Panc1 (cell line): ENCODE measurements at regions of chr17 and their contacts with region 1.

Region 1: DNA sequence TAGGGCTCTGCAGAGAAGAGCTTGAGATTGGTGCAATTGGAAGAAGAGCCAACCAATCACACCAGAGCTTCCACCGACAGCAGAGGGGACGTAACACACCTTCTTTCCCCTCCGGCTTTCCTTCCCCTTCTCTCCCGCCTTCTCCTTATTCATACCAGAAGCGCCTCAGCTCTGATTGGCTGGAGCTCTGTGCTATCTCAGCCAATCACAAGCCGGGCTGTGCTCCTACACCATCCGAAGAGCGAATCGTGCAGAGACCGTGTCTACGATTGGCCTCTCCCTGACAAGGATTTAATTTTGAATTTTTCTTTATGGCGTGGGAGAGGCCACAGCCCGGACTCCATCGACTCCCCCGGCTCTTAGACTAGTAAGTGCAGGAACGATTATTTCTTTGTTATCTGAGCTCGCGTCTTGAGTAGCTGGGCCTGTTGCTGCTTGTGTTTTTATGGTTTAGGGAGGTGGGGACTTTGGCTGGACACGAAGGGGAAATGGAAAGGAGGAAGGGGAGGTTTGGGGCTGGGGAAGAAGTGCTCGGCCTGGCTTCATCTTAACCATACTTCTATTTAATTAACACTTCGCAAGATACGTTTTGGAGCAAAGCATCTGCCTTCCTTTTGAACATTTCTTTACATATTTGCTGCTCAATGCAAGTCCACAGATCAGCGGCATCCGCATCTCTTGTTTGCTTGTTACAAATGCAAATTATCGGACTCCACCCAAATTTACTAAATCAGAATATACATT is at the start of gene PRR11:
- DNase-seq: no peak
- ATAC-seq: peak; percentile 89
- H3K4me3 ChIP-seq: peak within 1 kb of the TSS; percentile 80 to 86
- H3K27ac ChIP-seq: peak within 1 kb of the TSS; percentile 95
- H3K4me1 ChIP-seq: peaks cover 30% of the 10 kb centered on the region
- H3K27me3 ChIP-seq: no peaks in the 10 kb centered on the region
- CTCF ChIP-seq: no peak
- total RNA-seq, gene PRR11: 39.8 TPM

Region 2: GRCh38 chr17:58344047-58344790 is 811.4 kb before region 1 on chr17:
- CTCF ChIA-PET with region 1: no interaction called
- POLR2A ChIA-PET with region 1: no interaction called
- in situ Hi-C with region 1: no loop called
- intact Hi-C with region 1: loop called (anchors 5 kb)
- DNase-seq: no peak
- ATAC-seq: peak; percentile 57
- H3K4me3 ChIP-seq: no peak overlapping the region
- H3K27ac ChIP-seq: no peak overlapping the region
- H3K4me1 ChIP-seq: no peaks in the 10 kb centered on the region
- H3K27me3 ChIP-seq: no peaks in the 10 kb centered on the region
- CTCF ChIP-seq: no peak

Region 3: DNA sequence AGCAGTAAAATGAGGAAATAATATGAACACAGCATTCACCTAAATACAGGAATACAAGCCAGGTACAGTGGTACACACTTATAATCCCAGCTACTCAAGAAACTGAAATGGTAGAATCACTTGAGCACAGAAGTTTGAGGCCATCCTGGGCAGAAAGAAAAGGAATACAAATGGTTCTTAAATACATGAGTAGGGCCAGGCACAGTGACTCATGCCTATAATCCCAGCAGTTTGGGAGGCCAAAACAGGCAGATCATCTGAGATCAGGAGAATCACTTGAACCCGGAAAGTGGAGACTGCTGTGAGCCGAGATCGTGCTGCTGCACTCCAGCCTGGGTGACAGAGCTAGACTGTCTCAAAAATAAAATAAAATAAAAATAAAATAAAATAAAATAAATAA is 31.2 kb after region 1 on chr17:
- CTCF ChIA-PET with region 1: no interaction called
- POLR2A ChIA-PET with region 1: no interaction called
- in situ Hi-C with region 1: no loop called
- intact Hi-C with region 1: no loop called
- DNase-seq: no peak
- ATAC-seq: no peak
- H3K4me3 ChIP-seq: no peak overlapping the region
- H3K27ac ChIP-seq: no peak overlapping the region
- H3K4me1 ChIP-seq: no peaks in the 10 kb centered on the region
- H3K27me3 ChIP-seq: no peaks in the 10 kb centered on the region
- CTCF ChIP-seq: no peak